ENCODE measurements at regions of chr1 and their contacts with region 1.

Region 1: GRCh38 chr1:181142096-181142958 is 53.8 kb downstream of the IER5 start:
- DNase-seq: peak; percentile 95
- ATAC-seq: peak; percentile 76
- H3K4me3 Mint-ChIP-seq: peak overlapping the region; percentile 29
- H3K27ac Mint-ChIP-seq: peak overlapping the region; percentile 89
- H3K4me1 Mint-ChIP-seq: peaks cover 46% of the 10 kb centered on the region
- H3K27me3 Mint-ChIP-seq: peaks cover 3% of the 10 kb centered on the region
- CTCF ChIP-seq: peak; percentile 95

Region 2: DNA sequence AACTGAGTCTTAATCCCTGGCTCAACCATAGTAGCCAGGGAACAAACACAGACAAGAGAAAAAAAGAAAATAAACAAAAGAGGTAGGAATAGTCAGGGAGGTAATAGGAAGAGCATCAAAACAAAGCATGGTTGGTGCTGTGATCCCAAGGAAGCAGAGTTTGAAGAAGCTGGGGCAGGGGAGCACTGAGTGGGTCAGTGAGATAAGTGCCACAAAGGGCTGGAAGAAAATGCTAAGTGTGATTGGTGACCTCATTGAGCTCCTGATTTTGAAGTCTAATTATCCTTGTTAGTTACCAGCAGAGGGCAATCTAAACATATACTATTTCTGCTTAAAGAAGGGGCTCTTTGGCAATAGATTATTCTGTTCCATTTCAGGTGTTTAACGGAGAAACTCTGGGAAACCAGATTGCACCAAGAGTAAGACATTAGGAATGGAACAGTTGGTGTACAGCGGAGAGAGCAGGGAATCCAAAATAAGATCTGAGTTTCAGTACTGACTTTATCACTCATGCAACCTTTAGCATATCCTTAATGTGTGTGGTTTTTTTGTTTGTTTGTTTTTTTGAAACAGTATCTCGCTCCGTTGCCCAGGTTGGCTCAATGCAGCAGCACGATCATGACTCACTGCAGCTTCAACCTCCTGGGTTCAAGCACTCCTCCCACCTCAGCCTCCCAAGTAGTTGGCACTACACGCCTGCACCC is 260.4 kb before region 1 on chr1:
- CTCF ChIA-PET with region 1: interaction called, 26 read pairs
- POLR2A ChIA-PET with region 1: no interaction called
- intact Hi-C with region 1: loop called (anchors 1 kb)
- DNase-seq: no peak
- ATAC-seq: peak; percentile 65
- H3K4me3 Mint-ChIP-seq: no peak overlapping the region
- H3K27ac Mint-ChIP-seq: peak overlapping the region; percentile 33
- H3K4me1 Mint-ChIP-seq: peaks cover 7% of the 10 kb centered on the region
- H3K27me3 Mint-ChIP-seq: no peaks in the 10 kb centered on the region
- CTCF ChIP-seq: peak; percentile 56

Region 3: GRCh38 chr1:181033799-181034451 is 108.4 kb before region 1 on chr1 and contains the start of gene MR1:
- CTCF ChIA-PET with region 1: interaction called, 254 read pairs
- POLR2A ChIA-PET with region 1: interaction called, 5 read pairs
- intact Hi-C with region 1: loop called (anchors 2 kb)
- DNase-seq: peak; percentile 40
- ATAC-seq: peak; percentile 96
- H3K4me3 Mint-ChIP-seq: peak within 1 kb of the TSS; percentile 93
- H3K27ac Mint-ChIP-seq: peak within 1 kb of the TSS; percentile 99
- H3K4me1 Mint-ChIP-seq: peaks cover 53% of the 10 kb centered on the region
- H3K27me3 Mint-ChIP-seq: no peaks in the 10 kb centered on the region
- CTCF ChIP-seq: no peak
- total RNA-seq, gene MR1: 15.7 to 16.7 TPM

Region 4: DNA sequence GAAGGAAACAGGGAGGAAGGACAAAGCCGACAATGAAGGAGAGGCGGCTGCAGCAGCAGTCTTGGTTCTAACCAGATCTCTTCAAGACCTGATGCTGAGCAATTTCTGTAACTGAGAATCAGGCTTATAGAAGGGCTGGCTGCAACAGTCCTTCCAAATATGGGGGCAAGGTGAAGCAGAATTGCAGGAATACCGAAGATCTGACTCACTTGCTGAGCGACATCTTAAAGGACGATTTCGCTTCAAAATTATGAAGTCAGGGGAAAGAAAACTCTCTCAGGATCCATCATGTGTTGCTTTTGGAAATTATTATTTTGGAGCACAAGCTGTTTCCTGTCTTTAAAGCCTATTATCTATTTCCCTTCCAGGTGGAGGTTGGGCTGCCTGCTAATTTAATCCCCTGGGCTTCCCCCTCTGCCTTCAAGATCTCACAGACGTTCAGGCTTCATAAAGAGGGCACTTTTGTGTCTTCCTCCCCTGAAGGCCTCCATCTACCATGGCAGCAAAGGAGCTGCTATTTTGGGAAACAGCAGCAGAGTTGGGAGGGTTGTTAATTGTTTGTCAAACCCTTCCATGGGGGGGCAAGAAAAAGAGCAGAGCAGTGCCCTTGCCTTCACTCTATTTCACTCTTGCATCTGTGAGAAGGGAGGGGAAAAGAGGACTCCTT is 64.6 kb before region 1 on chr1:
- CTCF ChIA-PET with region 1: interaction called, 179 read pairs
- POLR2A ChIA-PET with region 1: interaction called, 3 read pairs
- intact Hi-C with region 1: no loop called
- DNase-seq: no peak
- ATAC-seq: no peak
- H3K4me3 Mint-ChIP-seq: no peak overlapping the region
- H3K27ac Mint-ChIP-seq: no peak overlapping the region
- H3K4me1 Mint-ChIP-seq: peaks cover 5% of the 10 kb centered on the region
- H3K27me3 Mint-ChIP-seq: peaks cover 11% of the 10 kb centered on the region
- CTCF ChIP-seq: no peak

Region 5: DNA sequence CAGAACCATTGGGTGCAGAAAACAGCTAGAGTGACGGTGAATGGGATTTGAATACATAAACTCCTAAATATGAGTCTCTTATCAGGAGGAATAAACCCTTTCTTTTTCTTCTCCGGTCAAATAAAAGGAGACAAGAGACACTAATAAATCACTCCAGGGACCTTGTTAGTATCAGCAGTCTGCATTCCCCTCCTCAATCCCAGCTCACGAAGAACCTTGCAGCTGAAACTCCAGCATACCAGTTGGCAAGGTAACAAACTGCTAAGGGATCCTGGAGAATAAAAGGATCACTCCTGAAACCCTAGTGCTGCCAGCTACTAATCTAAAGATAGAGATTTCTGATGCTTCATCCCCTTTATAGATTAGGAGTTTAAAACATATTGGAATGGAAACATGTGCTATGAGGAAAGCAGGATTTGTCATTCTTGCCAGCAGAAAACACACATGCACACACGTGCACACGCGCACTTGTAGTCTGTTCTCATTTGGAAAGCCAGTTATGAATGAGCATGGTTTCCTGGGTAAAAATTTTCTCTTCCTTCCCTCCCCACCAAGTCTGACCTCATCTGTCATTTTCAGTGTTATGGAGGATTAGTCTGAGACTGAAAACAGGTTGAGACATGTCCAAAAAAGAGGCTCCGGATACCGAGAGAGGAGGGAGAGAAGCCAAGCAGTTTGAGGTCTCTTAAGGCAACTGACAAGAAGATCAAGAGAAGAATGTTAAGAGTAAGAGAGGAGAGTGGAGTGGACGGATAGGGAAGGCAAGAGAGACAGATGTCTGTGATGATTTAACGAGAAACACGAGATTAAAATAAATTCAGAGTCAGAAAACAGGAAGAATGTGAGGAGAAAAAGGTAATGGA is 42.9 kb before region 1 on chr1:
- CTCF ChIA-PET with region 1: interaction called, 58 read pairs
- POLR2A ChIA-PET with region 1: interaction called, 45 read pairs
- intact Hi-C with region 1: loop called (anchors 2 kb)
- DNase-seq: peak; percentile 69
- ATAC-seq: peak; percentile 75
- H3K4me3 Mint-ChIP-seq: peak overlapping the region; percentile 56
- H3K27ac Mint-ChIP-seq: peak overlapping the region; percentile 96
- H3K4me1 Mint-ChIP-seq: peaks cover 78% of the 10 kb centered on the region
- H3K27me3 Mint-ChIP-seq: no peaks in the 10 kb centered on the region
- CTCF ChIP-seq: no peak

Region 6: GRCh38 chr1:181128592-181129497 is 13.5 kb before region 1 on chr1:
- CTCF ChIA-PET with region 1: interaction called, 12 read pairs
- POLR2A ChIA-PET with region 1: interaction called, 7 read pairs
- intact Hi-C with region 1: no loop called
- DNase-seq: no peak
- ATAC-seq: no peak
- H3K4me3 Mint-ChIP-seq: no peak overlapping the region
- H3K27ac Mint-ChIP-seq: no peak overlapping the region
- H3K4me1 Mint-ChIP-seq: peaks cover 36% of the 10 kb centered on the region
- H3K27me3 Mint-ChIP-seq: peaks cover 10% of the 10 kb centered on the region
- CTCF ChIP-seq: no peak

Region 7: DNA sequence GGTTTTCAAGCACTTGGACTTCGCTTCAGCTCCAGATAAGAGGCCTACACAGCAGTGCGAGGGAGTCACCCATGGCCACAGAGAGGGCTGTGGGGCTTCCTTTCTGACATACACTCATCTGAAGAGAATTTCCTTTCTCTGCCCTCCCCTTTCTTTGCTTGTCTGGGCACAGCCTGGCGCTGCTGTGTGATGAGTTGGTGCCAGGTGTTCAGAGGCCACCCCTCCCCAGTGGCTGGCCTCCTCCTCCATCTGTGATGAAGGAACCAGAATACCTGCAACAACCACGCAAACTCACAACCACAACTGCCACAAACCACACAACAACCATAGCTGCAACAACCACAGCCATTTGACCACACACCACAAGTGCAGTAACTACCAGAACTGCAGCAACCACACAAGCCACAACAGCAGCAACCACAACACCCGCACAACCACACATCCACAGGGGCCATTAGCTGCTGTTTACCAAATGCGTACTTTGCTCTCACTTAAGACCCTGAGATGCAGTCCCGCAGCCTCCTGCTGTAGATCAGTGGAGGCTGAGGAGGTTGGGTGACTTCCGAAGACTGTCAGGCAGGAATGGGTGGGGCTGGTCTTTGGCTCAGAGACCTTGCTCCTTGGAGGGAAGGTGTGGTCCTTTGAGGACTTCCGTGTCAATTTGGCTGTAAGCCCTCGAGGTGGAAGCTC is 17.3 kb after region 1 on chr1:
- CTCF ChIA-PET with region 1: interaction called, 66 read pairs
- POLR2A ChIA-PET with region 1: interaction called, 8 read pairs
- intact Hi-C with region 1: no loop called
- DNase-seq: peak; percentile 65
- ATAC-seq: peak; percentile 91
- H3K4me3 Mint-ChIP-seq: peak overlapping the region; percentile 51
- H3K27ac Mint-ChIP-seq: peak overlapping the region; percentile 58
- H3K4me1 Mint-ChIP-seq: peaks cover 26% of the 10 kb centered on the region
- H3K27me3 Mint-ChIP-seq: peaks cover 2% of the 10 kb centered on the region
- CTCF ChIP-seq: no peak

Region 8: GRCh38 chr1:181206513-181206912 is 64.2 kb after region 1 on chr1:
- CTCF ChIA-PET with region 1: no interaction called
- POLR2A ChIA-PET with region 1: no interaction called
- intact Hi-C with region 1: no loop called
- DNase-seq: no peak
- ATAC-seq: no peak
- H3K4me3 Mint-ChIP-seq: no peak overlapping the region
- H3K27ac Mint-ChIP-seq: no peak overlapping the region
- H3K4me1 Mint-ChIP-seq: no peaks in the 10 kb centered on the region
- H3K27me3 Mint-ChIP-seq: no peaks in the 10 kb centered on the region
- CTCF ChIP-seq: no peak

Region 9: GRCh38 chr1:181239086-181239485 is 96.8 kb after region 1 on chr1:
- CTCF ChIA-PET with region 1: no interaction called
- POLR2A ChIA-PET with region 1: no interaction called
- intact Hi-C with region 1: no loop called
- DNase-seq: no peak
- ATAC-seq: no peak
- H3K4me3 Mint-ChIP-seq: no peak overlapping the region
- H3K27ac Mint-ChIP-seq: no peak overlapping the region
- H3K4me1 Mint-ChIP-seq: no peaks in the 10 kb centered on the region
- H3K27me3 Mint-ChIP-seq: no peaks in the 10 kb centered on the region
- CTCF ChIP-seq: no peak

Region 10: DNA sequence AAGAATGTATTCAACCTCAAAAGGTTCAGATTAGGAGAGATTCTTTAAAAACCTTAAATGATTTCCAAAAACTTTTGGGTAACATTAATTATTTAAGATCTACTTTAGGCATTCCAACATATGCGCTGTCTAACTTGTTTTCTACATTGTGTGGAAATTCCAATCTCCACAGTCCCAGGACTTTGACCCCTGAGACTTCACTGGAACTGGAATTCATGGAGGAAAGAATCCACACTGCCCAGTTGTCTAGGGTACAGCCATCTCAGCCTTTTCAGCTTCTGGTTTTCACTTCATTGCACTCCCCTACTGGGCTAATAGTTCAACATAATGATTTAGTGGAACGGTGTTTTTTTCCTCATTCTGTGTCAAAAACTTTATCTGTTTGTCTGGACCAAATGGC is 107.7 kb after region 1 on chr1:
- CTCF ChIA-PET with region 1: no interaction called
- POLR2A ChIA-PET with region 1: no interaction called
- intact Hi-C with region 1: no loop called
- DNase-seq: no peak
- ATAC-seq: no peak
- H3K4me3 Mint-ChIP-seq: no peak overlapping the region
- H3K27ac Mint-ChIP-seq: no peak overlapping the region
- H3K4me1 Mint-ChIP-seq: no peaks in the 10 kb centered on the region
- H3K27me3 Mint-ChIP-seq: peaks cover 1% of the 10 kb centered on the region
- CTCF ChIP-seq: no peak

Measured in activated CD8-positive, alpha-beta T cell treated with anti-CD3 and anti-CD28 coated beads for 36 hours (primary cell).